GM10248 (cell line): ENCODE measurements at regions of chr6 and their contacts with region 1.

Region 1: GRCh38 chr6:42704241-42704936 is 18.0 kb downstream of the PRPH2 start:
- DNase-seq: no peak
- CTCF ChIP-seq: no peak

Region 2: DNA sequence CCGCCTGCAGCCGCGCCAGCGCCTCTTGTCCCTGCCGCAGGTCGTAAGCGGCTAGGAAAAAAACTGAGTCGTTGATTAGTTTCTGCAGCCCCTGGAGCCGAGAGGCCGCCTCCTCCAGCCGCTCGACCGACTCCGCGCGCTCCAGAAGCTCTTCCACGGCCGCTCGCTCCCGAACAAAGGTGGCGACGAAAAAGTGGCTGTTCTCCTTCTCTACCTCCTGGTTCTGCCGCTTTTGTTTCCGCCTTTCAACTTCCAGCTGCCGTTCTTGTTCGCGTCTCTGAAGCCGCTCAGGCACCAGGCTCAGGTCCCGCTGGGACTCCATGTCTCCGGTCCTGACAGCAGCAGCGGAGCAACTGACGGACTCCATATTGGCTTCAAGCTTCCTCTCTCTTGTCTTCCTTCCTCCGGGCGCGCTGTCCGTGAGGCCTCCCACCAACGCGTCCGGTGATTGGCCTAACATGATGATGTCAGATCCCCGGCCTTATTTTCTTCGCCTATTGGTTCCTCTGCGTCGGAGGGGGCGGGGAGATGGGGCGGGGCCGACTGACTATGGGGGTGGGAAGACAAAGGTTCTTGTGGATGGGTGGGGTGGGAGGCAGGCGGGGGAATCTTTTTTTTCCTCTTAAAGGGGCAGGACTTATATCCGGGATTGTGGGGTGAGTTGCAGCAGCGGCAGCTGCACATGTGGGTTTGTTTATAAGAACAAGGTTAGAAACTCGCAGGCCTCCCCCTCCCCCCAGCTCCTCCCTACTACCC is 41.5 kb after region 1 on chr6 and contains the start of gene TBCC:
- CTCF ChIA-PET with region 1: no interaction called
- POLR2A ChIA-PET with region 1: interaction called, 10 read pairs
- DNase-seq: peak; percentile 98
- CTCF ChIP-seq: no peak

Region 3: GRCh38 chr6:42788671-42789070 is 84.3 kb after region 1 on chr6:
- CTCF ChIA-PET with region 1: no interaction called
- POLR2A ChIA-PET with region 1: no interaction called
- DNase-seq: no peak
- CTCF ChIP-seq: no peak

Region 4: DNA sequence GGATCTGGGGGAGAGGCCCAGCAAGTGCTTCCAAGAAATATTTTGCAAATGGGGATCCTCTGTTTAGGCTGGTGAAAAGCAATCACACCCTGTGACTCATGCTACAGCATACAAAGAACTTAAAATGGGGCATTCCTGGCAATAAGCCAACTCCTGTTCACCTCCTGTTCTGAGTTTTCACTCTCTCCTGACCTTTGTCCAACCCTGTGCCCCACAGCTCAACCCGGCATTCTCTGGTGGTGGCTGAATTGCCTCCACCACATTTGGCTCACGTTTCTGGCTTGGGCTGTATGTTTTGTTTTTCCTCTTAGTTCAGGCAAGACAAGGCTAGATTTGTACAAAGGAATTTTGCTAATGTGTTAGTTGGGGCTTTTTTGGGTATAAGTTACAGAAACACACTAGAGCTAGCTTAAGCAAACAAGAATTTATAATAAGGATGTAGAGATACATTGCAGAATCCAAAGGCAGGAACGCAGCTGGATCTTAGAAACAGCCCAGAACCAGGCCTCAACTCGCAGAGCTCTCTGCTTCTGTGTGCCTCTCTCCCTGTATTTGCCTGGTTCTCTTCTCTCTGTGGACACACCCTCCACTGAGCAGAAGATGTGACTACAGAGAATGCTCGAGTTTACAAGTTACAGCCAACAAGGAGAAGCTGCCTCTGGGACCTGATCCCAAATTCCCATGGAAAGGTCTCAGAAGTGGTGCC is 732.3 kb after region 1 on chr6:
- CTCF ChIA-PET with region 1: no interaction called
- POLR2A ChIA-PET with region 1: no interaction called
- DNase-seq: no peak
- CTCF ChIP-seq: no peak